Ascending aorta (tissue), 2 donors: ENCODE measurements at regions of chr15 and their contacts with region 1.

Region 1: DNA sequence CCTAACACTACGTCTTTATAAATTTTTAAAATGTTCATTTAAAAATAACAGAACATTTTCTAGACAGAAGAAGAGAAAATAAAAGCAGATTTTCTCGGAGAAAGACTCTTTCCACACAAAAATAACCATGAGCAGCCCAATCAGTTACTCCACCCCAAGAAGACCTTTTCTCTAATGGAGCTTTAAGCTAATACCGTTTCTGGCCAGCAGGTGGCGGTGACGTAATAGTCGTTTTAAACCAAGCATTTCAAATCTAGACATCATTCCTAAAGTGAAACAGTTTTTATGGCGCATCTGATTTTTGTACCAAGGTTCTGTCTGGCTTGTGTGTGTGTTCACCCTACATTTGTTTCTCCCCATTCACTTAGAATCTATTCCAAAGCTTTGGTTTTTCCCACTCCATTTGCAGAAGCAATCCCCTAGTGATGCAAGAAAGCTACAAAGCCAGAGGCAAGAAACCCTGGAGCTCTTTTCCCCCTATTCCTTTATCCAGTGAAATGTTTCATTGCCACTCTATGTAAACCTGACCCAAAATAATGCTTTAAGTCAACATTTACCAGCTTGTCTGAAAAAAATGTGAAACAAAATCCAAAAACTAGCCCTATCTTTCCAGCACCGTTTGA is 336.7 kb upstream of the IGF1R start:
- DNase-seq: peak in 1 of 2 donors; percentile 91
- H3K4me3 ChIP-seq: no peak overlapping the region
- H3K27ac ChIP-seq: no peak overlapping the region
- H3K4me1 ChIP-seq: no peaks in the 10 kb centered on the region
- H3K27me3 ChIP-seq: no peaks in the 10 kb centered on the region
- CTCF ChIP-seq: peak; percentile 55 to 76 (median 76)

Region 2: GRCh38 chr15:98421419-98422129 is 109.9 kb after region 1 on chr15:
- intact Hi-C with region 1: loop called (anchors 1 kb)
- DNase-seq: peak in 1 of 2 donors; percentile 85
- H3K4me3 ChIP-seq: peak overlapping the region; percentile 44 to 56
- H3K27ac ChIP-seq: no peak overlapping the region
- H3K4me1 ChIP-seq: peaks cover 3 to 7% of the 10 kb centered on the region in 2 donors
- H3K27me3 ChIP-seq: no peaks in the 10 kb centered on the region
- CTCF ChIP-seq: peak; percentile 94 to 99 (median 99)